Naive thymus-derived CD8-positive, alpha-beta T cell (primary cell): ENCODE measurements at regions of chr4 and their contacts with region 1.

Region 1: DNA sequence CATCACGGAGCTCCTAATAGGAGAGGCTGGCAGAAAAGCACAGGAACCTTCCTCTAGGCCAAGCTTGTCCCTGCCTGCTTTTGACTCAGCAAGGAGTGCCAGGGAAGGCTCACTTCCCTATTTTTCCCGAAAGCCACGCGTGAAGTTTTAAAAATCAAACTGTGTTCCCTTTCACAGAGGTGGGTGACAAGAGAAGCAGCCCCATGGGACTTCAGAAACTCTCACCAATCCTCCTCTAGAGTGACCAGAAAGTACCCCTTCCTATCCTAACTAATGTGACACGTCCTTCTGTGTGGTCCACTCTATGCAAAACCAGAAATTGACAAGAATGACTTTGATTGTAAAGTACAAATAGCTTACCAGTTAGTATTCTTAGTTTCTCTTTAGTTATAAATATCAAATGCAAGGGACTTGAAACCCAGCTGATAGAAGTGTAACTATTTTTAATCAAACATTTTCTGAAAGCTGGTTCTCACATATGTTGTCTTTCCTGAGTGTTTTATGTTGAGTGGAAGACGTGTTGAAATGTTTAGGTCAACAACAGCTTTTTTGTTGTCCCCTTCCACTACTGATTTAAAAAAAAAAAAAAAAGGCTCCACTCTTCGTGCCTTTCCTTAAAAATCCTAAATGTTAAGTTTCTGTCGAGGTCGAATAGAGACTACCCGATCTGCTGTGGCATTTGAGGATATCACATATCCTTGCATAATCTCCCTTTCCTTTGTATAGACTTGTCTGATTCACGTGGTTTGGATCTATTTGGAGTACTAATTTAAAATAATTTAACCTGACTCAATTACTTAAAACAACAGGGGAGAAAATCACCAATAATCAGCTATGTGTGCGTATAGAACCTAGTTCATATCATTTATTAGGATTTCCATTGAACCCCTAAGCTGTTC is 42.1 kb downstream of the NFKB1 start:
- DNase-seq: no peak
- ATAC-seq: no peak
- H3K4me3 Mint-ChIP-seq: no peak overlapping the region
- H3K27ac Mint-ChIP-seq: peak overlapping the region in 3 of 10 donors; percentile 10 to 68 (median 31)
- H3K4me1 Mint-ChIP-seq: peaks cover 15 to 63% (median 41%) of the 10 kb centered on the region in 4 donors
- H3K27me3 Mint-ChIP-seq: no peaks in the 10 kb centered on the region

Region 2: GRCh38 chr4:102525097-102525496 is 18.2 kb before region 1 on chr4:
- POLR2A ChIA-PET with region 1: interaction called, 11 read pairs
- DNase-seq: no peak
- ATAC-seq: no peak
- H3K4me3 Mint-ChIP-seq: peak overlapping the region in 5 of 10 donors; percentile 17 to 57 (median 39)
- H3K27ac Mint-ChIP-seq: peak overlapping the region in 9 of 10 donors; percentile 8 to 90 (median 83)
- H3K4me1 Mint-ChIP-seq: peaks cover 47 to 94% (median 79%) of the 10 kb centered on the region in 4 donors
- H3K27me3 Mint-ChIP-seq: no peaks in the 10 kb centered on the region